ENCODE measurements at regions of chr5 and their contacts with region 1.

Region 1: DNA sequence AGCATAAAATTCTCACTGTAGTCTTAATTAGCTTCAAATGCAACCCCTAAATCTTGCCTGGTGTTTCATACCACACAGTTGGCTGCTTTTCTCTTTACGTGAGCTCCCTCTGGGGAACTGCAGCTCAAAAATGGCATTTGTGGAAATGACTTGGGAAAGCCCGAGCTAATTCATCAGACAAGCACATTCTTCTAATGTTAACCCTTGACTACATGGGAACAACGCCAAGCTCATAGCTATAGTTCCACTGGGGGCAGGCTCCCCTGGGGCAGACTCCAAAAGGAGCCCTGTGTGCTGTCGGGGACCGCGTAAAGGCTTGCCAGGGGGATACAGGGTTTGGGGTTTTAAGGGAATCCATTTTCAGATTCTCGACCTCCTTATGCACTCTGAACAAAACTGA is 301.4 kb upstream of the DAP start:
- DNase-seq: no peak
- ATAC-seq: peak in 3 of 8 donors; percentile 26 to 38 (median 35)
- H3K4me3 ChIP-seq: no peak overlapping the region
- H3K27ac ChIP-seq: no peak overlapping the region
- H3K4me1 ChIP-seq: peaks cover 0 to 4% (median 0%) of the 10 kb centered on the region in 9 donors
- H3K27me3 ChIP-seq: no peaks in the 10 kb centered on the region
- CTCF ChIP-seq: peak in 3 of 9 donors; percentile 9 to 20 (median 19)

Region 2: GRCh38 chr5:10863763-10864383 is 198.5 kb before region 1 on chr5:
- intact Hi-C with region 1: loop called in 1 of 10 experiments (anchors 10 kb)
- DNase-seq: peak; percentile 26 to 38
- ATAC-seq: peak in 4 of 8 donors; percentile 52 to 70 (median 60)
- H3K4me3 ChIP-seq: no peak overlapping the region
- H3K27ac ChIP-seq: no peak overlapping the region
- H3K4me1 ChIP-seq: no peaks in the 10 kb centered on the region
- H3K27me3 ChIP-seq: peaks cover 0 to 4% (median 0%) of the 10 kb centered on the region in 7 donors
- CTCF ChIP-seq: peak; percentile 45 to 90 (median 68)

Region 3: DNA sequence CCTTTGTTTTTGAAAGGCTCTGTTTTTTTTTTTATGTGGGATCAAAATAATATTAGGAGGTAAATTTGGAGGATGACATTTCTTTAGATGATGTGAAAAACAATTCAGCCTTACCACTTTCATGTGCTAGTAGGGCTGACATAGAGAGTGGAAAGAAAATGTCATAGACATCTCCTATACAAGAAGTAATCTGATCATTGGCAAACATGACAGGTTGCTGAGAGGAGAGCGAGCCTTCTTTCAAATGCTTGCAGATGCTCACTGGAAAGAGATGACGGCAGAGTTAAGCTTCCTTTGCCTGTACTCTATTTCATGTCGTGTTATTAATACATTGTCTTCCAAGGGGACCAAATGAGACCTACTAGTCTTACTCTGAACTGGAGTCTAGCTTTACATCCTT is 141.2 kb before region 1 on chr5:
- intact Hi-C with region 1: no loop called
- DNase-seq: no peak
- ATAC-seq: no peak
- H3K4me3 ChIP-seq: no peak overlapping the region
- H3K27ac ChIP-seq: no peak overlapping the region
- H3K4me1 ChIP-seq: no peaks in the 10 kb centered on the region
- H3K27me3 ChIP-seq: peaks cover 0 to 8% (median 0%) of the 10 kb centered on the region in 7 donors
- CTCF ChIP-seq: no peak

Region 4: GRCh38 chr5:10987930-10988504 is 74.4 kb before region 1 on chr5:
- intact Hi-C with region 1: loop called in 1 of 10 experiments (anchors 5 kb)
- DNase-seq: peak; percentile 75 to 77
- ATAC-seq: peak; percentile 80 to 94 (median 88)
- H3K4me3 ChIP-seq: no peak overlapping the region
- H3K27ac ChIP-seq: peak overlapping the region in 5 of 10 donors; percentile 44 to 85 (median 77)
- H3K4me1 ChIP-seq: peaks cover 3 to 25% (median 11%) of the 10 kb centered on the region in 9 donors
- H3K27me3 ChIP-seq: peaks cover 0 to 9% (median 0%) of the 10 kb centered on the region in 7 donors
- CTCF ChIP-seq: peak; percentile 53 to 81 (median 74)